ENCODE measurements at regions of chr2 and their contacts with region 1.

Region 1: DNA sequence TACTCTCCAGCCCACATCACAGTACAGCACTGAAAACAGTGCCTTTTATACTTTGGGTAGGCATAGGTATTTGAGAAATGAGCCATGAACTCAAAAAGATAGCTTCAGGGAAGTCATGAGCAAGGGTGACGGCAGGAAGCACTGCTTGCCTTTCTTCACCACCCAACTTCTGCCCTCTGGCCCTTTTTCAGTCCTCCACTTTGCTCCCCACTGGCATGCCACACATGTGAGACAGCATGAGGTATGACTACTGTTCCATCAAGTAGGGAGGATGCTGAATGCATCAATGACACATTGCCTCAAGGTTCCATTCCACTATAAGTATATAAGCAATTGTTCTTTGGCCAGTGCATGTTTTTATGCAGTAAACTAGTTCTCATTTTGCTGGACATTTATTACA is 373.0 kb downstream of the NRXN1 start:
- DNase-seq: peak; percentile 85
- H3K4me3 ChIP-seq: no peak overlapping the region
- H3K27ac ChIP-seq: peak overlapping the region; percentile 70
- H3K4me1 ChIP-seq: peaks cover 12% of the 10 kb centered on the region
- H3K27me3 ChIP-seq: no peaks in the 10 kb centered on the region
- CTCF ChIP-seq: no peak

Region 2: DNA sequence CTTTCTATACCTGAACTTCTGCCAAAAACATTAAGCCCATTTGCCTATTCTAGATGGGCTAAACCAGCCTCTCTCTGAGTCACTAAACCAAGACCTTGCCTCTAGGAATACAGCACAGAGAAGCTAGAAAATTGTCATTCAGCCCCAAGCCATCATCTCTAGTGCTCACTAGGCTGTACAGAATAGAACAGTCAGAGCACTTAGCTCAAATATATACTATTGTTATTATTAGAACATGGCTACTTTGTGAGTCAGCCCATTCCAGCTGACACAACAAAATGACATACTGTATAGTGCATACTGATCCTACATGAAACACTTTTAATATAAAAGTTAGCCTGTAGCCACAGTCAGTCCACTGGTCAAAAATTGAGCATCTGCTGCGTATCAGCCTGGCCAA is 45.7 kb before region 1 on chr2:
- CTCF ChIA-PET with region 1: no interaction called
- dilution Hi-C with region 1: no loop called
- in situ Hi-C with region 1: no loop called
- intact Hi-C with region 1: loop called (anchors 2 kb)
- DNase-seq: peak; percentile 29
- H3K4me3 ChIP-seq: no peak overlapping the region
- H3K27ac ChIP-seq: no peak overlapping the region
- H3K4me1 ChIP-seq: peaks cover 20% of the 10 kb centered on the region
- H3K27me3 ChIP-seq: no peaks in the 10 kb centered on the region
- CTCF ChIP-seq: no peak

Region 3: GRCh38 chr2:50680646-50681045 is 21.8 kb after region 1 on chr2:
- CTCF ChIA-PET with region 1: no interaction called
- dilution Hi-C with region 1: no loop called
- in situ Hi-C with region 1: no loop called
- intact Hi-C with region 1: no loop called
- DNase-seq: no peak
- H3K4me3 ChIP-seq: no peak overlapping the region
- H3K27ac ChIP-seq: no peak overlapping the region
- H3K4me1 ChIP-seq: no peaks in the 10 kb centered on the region
- H3K27me3 ChIP-seq: no peaks in the 10 kb centered on the region
- CTCF ChIP-seq: no peak

Region 4: GRCh38 chr2:50953021-50953642 is 294.2 kb after region 1 on chr2:
- CTCF ChIA-PET with region 1: no interaction called
- dilution Hi-C with region 1: no loop called
- in situ Hi-C with region 1: no loop called
- intact Hi-C with region 1: loop called (anchors 5 kb)
- DNase-seq: peak; percentile 96
- H3K4me3 ChIP-seq: no peak overlapping the region
- H3K27ac ChIP-seq: peak overlapping the region; percentile 98
- H3K4me1 ChIP-seq: peaks cover 30% of the 10 kb centered on the region
- H3K27me3 ChIP-seq: no peaks in the 10 kb centered on the region
- CTCF ChIP-seq: no peak